ENCODE measurements at regions of chr11 and their contacts with region 1.

Region 1: DNA sequence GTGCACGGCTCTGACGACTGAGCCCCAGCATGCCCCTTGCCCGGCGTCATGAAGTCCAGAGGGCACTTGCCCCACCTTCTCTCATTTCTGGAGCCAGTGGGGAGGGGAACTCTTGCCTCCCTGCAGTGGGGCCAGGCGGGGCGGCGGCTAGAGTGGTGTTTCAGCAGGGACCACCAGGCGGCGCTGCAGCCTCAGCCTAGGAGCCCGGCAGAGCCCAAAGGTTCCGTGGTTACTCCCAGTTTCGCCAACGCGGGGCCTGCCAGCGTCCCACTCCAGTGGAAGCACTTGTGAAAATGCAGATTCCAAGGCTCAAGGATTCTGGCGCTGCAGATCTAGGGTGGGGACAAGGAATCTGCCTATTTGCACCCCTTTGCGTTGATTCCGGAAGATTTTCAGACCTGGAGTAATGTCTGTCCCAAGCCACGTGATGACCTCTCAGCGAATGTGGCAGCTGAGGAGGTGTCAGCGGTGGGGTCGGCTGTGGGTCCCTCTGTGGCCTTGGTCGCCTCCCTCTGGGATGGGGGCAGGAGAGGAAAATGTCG is 55.7 kb downstream of the CD82 start:
- DNase-seq: peak; percentile 46 to 98
- H3K4me3 ChIP-seq: peak overlapping the region in 3 of 4 experiments; percentile 30 to 53 (median 40); a peak in 6 of 8 replicates
- H3K27ac ChIP-seq: no peak overlapping the region
- H3K4me1 ChIP-seq: peaks cover 0 to 3% (median 0%) of the 10 kb centered on the region in 4 experiments; a peak in 3 of 7 replicates
- H3K27me3 ChIP-seq: peaks cover 0 to 9% (median 7%) of the 10 kb centered on the region in 4 experiments; a peak in 4 of 7 replicates
- CTCF ChIP-seq: peak; percentile 92 to 96 (median 95)
- EP300 ChIP-seq: no peak
- POLR2A ChIP-seq: no peak
- RAD21 ChIP-seq: peak; percentile 98 to 99

Region 2: GRCh38 chr11:44519989-44520737 is 101.0 kb before region 1 on chr11:
- CTCF ChIA-PET with region 1: interaction called, 15 read pairs
- POLR2A ChIA-PET with region 1: no interaction called
- DNase-seq: no peak
- H3K4me3 ChIP-seq: no peak overlapping the region
- H3K27ac ChIP-seq: no peak overlapping the region
- H3K4me1 ChIP-seq: peaks cover 0 to 4% (median 0%) of the 10 kb centered on the region in 4 experiments; a peak in 1 of 7 replicates
- H3K27me3 ChIP-seq: no peaks in the 10 kb centered on the region
- CTCF ChIP-seq: no peak
- EP300 ChIP-seq: no peak
- POLR2A ChIP-seq: no peak
- RAD21 ChIP-seq: no peak

Region 3: GRCh38 chr11:44596525-44597276 is 24.5 kb before region 1 on chr11:
- CTCF ChIA-PET with region 1: interaction called, 15 read pairs
- POLR2A ChIA-PET with region 1: no interaction called
- DNase-seq: no peak
- H3K4me3 ChIP-seq: no peak overlapping the region
- H3K27ac ChIP-seq: no peak overlapping the region
- H3K4me1 ChIP-seq: peaks cover 0 to 11% (median 2%) of the 10 kb centered on the region in 4 experiments; a peak in 3 of 7 replicates
- H3K27me3 ChIP-seq: no peaks in the 10 kb centered on the region
- CTCF ChIP-seq: no peak
- EP300 ChIP-seq: no peak
- POLR2A ChIP-seq: no peak
- RAD21 ChIP-seq: no peak

Region 4: GRCh38 chr11:44755556-44756523 is 134.6 kb after region 1 on chr11:
- CTCF ChIA-PET with region 1: interaction called, 87 read pairs
- POLR2A ChIA-PET with region 1: interaction called, 4 read pairs
- DNase-seq: no peak
- H3K4me3 ChIP-seq: peak overlapping the region in 1 of 4 experiments; percentile 16; a peak in 1 of 8 replicates
- H3K27ac ChIP-seq: no peak overlapping the region
- H3K4me1 ChIP-seq: peaks cover 16 to 37% (median 22%) of the 10 kb centered on the region in 4 experiments
- H3K27me3 ChIP-seq: peaks cover 4 to 30% (median 25%) of the 10 kb centered on the region in 4 experiments
- CTCF ChIP-seq: no peak
- EP300 ChIP-seq: no peak
- POLR2A ChIP-seq: no peak
- RAD21 ChIP-seq: no peak

Region 5: GRCh38 chr11:44804449-44805437 is 183.5 kb after region 1 on chr11:
- CTCF ChIA-PET with region 1: interaction called, 10 read pairs
- POLR2A ChIA-PET with region 1: no interaction called
- DNase-seq: no peak
- H3K4me3 ChIP-seq: no peak overlapping the region
- H3K27ac ChIP-seq: no peak overlapping the region
- H3K4me1 ChIP-seq: peaks cover 0 to 17% (median 11%) of the 10 kb centered on the region in 4 experiments; a peak in 5 of 7 replicates
- H3K27me3 ChIP-seq: 0 out of 7 replicates have a peak, but pooled peaks cover 0 to 2% (median 0%) of the 10 kb centered on the region in 4 experiments
- CTCF ChIP-seq: no peak
- EP300 ChIP-seq: no peak
- POLR2A ChIP-seq: no peak
- RAD21 ChIP-seq: no peak

Region 6: DNA sequence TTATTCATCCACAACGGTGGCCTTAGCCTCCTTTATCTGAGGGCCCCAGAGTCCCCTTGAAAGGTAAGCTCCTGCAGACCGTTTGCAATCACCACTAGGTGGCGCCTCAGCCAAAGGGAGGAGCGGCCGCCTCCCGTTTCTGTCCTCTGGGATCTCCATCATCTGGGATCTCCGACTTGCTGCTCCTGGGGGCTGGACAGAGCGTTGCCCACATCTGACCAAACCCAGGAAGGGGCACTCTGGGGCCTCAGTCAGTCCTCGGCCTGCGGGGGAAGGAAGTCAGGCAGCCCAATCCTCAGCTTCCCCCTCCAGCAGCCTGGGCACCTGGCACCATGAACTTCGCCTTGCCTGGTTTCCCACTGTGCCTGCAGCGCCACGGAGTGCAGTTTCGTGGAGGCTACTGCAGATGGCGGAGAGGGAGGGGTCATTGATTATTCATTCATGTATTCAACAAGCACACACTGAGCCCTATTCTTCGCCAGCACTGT is 306.0 kb after region 1 on chr11:
- CTCF ChIA-PET with region 1: interaction called, 18 read pairs
- POLR2A ChIA-PET with region 1: no interaction called
- DNase-seq: peak; percentile 70 to 91
- H3K4me3 ChIP-seq: peak overlapping the region in 1 of 4 experiments; percentile 20; a peak in 1 of 8 replicates
- H3K27ac ChIP-seq: no peak overlapping the region
- H3K4me1 ChIP-seq: peaks cover 0 to 18% (median 13%) of the 10 kb centered on the region in 4 experiments; a peak in 6 of 7 replicates
- H3K27me3 ChIP-seq: no peaks in the 10 kb centered on the region
- CTCF ChIP-seq: peak; percentile 84 to 95 (median 93)
- EP300 ChIP-seq: no peak
- POLR2A ChIP-seq: no peak
- RAD21 ChIP-seq: peak; percentile 86 to 93